Right ventricle myocardium superior (tissue), 1 donor: ENCODE measurements at regions of chr16 and their contacts with region 1.

Region 1: DNA sequence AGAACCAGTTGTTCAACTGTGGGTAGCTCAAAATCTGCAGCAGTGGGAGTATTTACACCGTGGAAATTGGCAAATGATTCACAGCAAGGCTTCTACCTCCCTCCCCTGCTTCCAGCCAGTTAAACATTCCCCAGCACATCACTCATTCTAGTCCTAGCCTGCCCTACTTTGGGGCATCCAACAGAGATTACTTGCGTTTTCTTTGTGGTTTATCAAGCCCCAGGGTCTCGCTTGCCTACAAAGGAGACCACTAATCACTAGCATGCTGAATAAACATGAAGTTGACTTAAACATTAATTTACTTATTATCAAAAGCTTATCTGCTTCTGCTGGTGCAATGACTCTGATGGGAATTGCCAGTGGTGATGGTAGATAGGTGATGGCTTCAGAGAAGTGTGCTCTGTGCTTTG is 94.5 kb downstream of the MARF1 start:
- DNase-seq: no peak
- ATAC-seq: no peak

Region 2: DNA sequence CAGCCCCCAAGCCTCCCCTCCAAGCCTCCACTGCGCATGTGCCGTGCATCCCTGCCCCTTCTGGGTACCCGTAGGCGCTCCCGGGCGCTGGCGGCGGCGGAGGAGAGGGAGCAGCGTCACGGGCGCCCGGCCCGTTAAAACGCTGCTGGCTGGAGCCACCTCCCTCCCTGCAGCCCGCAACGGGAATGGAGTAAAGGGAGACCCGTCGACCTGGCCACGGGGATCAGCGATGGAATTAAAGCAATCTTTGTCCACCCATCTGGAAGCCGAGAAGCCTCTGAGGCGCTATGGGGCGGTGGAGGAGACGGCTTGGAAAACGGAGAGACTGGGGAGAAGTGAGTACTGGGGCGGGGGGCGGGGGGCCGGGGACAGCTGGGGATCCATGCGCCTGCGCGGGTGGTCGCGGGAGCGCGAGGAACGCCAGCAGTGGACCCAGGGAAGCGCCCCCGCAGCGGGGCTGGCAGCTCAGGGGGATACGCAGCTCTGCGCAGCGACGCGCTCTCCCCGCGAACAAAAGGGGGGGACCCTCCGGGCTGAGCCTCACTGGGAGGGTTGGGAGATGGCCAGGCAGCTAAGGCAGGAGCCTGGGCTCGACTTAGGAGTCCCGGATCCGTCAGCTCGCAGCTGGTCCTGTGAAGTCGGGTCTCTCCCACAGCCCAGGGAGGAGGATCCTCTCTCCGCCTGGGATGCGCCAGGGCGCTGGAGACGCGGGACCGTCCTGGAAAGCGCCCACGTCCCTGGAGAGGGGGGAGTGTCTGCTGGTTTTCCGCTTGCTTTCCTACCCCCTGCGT is 113.9 kb before region 1 on chr16 and contains the start of gene BMERB1:
- intact Hi-C with region 1: loop called (anchors 10 kb)
- DNase-seq: peak; percentile 82
- ATAC-seq: peak; percentile 97
- total RNA-seq, gene BMERB1: 71.8 TPM

Region 3: DNA sequence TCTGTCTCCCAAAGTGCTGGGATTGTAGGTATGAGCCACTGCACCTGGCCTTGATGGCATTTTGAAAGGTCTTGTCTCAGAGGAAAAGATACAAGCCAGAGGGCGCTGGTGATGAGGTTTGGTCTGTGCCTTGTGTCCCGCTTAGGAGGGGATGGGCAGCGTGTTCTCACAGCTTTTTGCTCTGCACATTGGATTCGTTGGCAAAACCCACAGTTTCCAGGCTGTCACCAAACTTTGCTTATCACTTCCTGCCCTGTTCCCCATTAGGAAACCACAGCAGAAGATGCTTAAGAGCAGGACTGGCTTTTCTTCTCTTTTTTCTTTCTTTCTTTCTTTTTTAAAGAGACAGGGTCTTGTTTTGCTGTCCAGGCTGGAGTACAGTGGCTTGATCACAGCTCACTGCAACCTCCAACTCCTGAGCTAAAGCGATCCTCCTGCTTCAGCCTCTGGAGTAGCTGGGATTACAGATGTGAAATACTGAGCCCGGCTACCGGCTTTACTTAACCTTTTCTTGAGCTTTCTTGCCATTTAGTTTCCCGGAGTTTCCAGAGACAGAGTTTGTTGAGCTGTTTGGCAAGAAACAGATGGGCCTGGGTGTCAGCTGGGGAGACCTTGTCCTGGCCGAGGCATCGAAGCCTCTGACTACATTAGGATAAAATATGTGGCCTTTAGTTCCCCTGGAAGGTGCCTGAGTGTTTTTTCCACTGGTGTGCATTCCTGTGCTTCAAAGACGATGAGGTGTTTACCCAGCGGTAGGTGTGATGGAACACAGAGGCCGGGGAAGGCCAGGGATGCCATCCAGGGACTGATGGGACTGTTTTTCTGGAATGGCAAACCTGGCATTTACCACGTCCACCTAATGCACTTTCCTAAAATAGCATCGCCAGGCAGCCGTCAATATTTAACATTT is 513.8 kb after region 1 on chr16:
- intact Hi-C with region 1: no loop called
- DNase-seq: peak; percentile 52
- ATAC-seq: peak; percentile 78